Mammary epithelial cell (primary cell): ENCODE measurements at regions of chr9 and their contacts with region 1.

Region 1: GRCh38 chr9:133023117-133023890 is 7.5 kb upstream of the GTF3C5 start:
- DNase-seq: no peak
- H3K4me3 ChIP-seq: no peak overlapping the region
- H3K27ac ChIP-seq: no peak overlapping the region
- H3K4me1 ChIP-seq: no peaks in the 10 kb centered on the region
- H3K27me3 ChIP-seq: no peaks in the 10 kb centered on the region
- CTCF ChIP-seq: no peak

Region 2: GRCh38 chr9:132973713-132974112 is 49.6 kb before region 1 on chr9:
- CTCF ChIA-PET with region 1: no interaction called
- dilution Hi-C with region 1: no loop called
- in situ Hi-C with region 1: no loop called
- intact Hi-C with region 1: loop called (anchors 2 kb)
- DNase-seq: no peak
- H3K4me3 ChIP-seq: no peak overlapping the region
- H3K27ac ChIP-seq: no peak overlapping the region
- H3K4me1 ChIP-seq: peaks cover 4% of the 10 kb centered on the region
- H3K27me3 ChIP-seq: peaks cover 2% of the 10 kb centered on the region
- CTCF ChIP-seq: no peak

Region 3: DNA sequence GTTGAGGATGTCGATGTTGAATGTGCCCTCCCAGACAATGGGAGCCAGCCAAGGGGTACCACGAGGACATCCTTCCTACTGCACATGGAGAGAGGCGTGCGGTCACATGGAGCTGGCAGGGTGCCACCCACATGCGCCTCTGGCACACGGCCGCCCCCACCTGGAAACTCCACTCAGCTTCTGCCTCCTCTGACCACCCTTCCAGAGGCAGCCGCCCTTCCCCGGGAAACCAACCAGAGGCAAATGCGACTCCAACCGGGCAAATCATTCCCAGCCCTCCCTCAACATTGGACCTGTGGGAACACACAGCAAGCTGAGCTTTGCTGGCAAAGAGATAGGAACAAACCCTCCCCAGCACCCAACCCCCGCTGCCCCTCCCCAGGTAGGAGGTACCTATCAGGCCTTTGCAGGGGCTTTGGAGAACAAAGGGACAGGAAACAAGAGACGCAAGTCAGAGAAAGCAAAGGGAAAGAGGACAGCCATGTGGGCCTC is 234.2 kb after region 1 on chr9:
- CTCF ChIA-PET with region 1: no interaction called
- dilution Hi-C with region 1: no loop called
- in situ Hi-C with region 1: no loop called
- intact Hi-C with region 1: no loop called
- DNase-seq: no peak
- H3K4me3 ChIP-seq: no peak overlapping the region
- H3K27ac ChIP-seq: no peak overlapping the region
- H3K4me1 ChIP-seq: no peaks in the 10 kb centered on the region
- H3K27me3 ChIP-seq: no peaks in the 10 kb centered on the region
- CTCF ChIP-seq: no peak

Region 4: DNA sequence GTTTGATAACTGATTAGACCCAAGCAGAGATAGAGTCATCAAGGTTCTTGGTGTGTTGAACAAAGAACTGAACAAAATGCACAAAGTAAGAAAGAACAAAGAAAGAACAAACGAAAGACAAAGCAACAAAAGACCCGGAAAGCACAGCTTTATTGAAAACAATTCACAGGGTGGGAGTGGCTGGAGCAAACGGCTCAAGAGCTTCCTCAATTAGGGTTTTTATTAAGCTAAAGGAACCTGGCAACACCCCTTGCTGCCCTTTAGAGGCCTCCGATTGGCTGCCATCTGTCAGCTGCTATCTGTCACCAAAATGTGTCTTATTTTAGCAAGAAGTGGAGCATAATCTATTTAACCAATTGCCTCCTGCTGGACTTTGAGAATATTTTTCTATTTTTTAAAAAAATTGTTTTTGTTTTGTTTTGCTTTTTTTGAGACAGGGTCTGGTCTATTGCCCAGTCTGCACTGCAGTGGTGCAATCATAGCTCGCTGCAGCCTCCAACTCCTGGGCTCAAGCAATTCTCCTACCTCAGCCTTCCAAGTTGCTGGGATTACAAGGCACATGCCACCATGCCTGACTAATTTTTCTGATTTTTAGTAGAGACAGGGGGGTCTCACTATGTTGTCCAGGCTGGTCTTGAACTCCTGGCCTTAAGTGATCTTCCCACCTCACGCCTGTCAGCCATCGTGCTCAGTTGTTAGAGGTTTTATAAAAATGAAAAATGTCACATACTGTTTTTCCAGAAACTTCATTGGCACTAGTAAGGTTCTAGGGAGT is 259.3 kb after region 1 on chr9:
- CTCF ChIA-PET with region 1: interaction called, 17 read pairs
- dilution Hi-C with region 1: no loop called
- in situ Hi-C with region 1: no loop called
- intact Hi-C with region 1: no loop called
- DNase-seq: no peak
- H3K4me3 ChIP-seq: no peak overlapping the region
- H3K27ac ChIP-seq: no peak overlapping the region
- H3K4me1 ChIP-seq: no peaks in the 10 kb centered on the region
- H3K27me3 ChIP-seq: peaks cover 3% of the 10 kb centered on the region
- CTCF ChIP-seq: no peak

Region 5: DNA sequence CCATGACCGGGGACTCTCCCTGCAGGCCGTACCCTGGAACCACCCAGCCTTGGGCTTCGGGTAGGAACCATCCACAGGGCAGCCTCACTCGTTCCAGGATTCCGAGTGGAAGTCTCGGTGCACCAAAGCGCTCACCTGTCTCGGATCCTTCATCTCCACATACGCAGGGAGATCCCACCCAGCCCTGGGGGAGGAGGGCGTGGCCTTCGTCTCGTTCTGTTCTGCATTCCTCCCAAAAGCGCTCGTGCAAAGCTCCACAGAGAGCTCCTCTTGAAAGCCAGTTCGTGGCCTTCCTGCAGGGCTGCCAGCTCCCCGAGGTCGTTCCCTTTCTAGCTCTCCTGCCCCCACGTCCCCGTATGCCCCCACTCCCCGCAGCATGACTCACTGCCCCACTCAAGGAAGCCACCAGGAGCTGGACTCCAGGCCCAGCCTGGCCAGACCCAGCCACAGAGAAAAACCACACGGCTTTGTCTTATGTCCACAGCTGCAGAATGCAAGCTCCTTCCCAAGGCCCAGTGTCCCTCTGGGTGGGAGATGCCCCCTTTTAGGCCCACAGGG is 779.8 kb after region 1 on chr9:
- CTCF ChIA-PET with region 1: no interaction called
- dilution Hi-C with region 1: no loop called
- in situ Hi-C with region 1: no loop called
- intact Hi-C with region 1: no loop called
- DNase-seq: no peak
- H3K4me3 ChIP-seq: no peak overlapping the region
- H3K27ac ChIP-seq: no peak overlapping the region
- H3K4me1 ChIP-seq: no peaks in the 10 kb centered on the region
- H3K27me3 ChIP-seq: no peaks in the 10 kb centered on the region
- CTCF ChIP-seq: no peak